Activated B cell treated with CpG ODN at 0.5 μM for 24 hours (primary cell): ENCODE measurements at regions of chr15 and their contacts with region 1.

Region 1: DNA sequence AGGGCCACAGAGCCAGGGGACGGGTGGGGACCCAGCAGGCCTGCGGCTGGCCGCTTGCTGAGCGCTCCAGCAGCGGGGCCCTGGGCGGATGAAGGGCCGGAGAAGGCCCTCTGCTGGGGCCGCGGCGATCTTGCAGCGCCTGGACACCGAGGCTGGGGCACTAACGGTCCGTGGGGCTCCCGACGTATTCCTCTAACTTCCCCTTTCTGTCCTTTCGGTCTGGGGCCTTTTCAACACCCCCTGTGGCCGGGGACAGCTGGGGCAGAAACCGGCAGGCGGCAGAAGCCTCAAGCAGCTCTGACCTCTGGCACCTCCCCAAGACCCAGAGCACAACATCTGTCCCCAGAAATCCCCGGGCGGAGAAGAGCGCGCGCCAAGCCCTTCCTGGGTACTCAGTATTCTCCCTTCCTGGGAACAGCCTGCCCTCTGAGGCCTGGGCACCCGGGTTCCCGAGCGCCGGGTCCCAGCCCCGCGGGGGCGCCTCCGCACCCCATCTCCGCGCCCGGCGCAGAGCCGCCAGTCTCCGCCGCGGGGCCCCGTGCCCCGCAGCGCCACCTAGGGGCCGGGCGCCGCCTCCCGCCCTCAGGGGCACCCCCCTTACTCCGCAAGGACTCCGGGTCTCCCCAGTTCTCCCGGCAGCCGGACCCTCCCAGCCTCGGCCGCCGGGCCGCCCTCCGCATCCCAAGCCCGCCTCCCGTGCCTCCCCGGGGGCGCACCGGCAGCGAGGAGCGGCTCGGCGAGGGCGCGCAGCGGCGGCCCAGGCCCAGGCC is 582 bp upstream of the SLCO3A1 start:
- DNase-seq: peak; percentile 31
- ATAC-seq: peak; percentile 55
- H3K4me3 Mint-ChIP-seq: peak overlapping the region; percentile 66
- H3K27ac Mint-ChIP-seq: no peak overlapping the region
- H3K4me1 Mint-ChIP-seq: peaks cover 43% of the 10 kb centered on the region
- H3K27me3 Mint-ChIP-seq: peaks cover 49% of the 10 kb centered on the region
- CTCF ChIP-seq: no peak

Region 2: GRCh38 chr15:91338766-91339165 is 514.2 kb before region 1 on chr15:
- CTCF ChIA-PET with region 1: no interaction called
- POLR2A ChIA-PET with region 1: no interaction called
- intact Hi-C with region 1: loop called (anchors 10 kb)
- DNase-seq: no peak
- ATAC-seq: no peak
- H3K4me3 Mint-ChIP-seq: no peak overlapping the region
- H3K27ac Mint-ChIP-seq: no peak overlapping the region
- H3K4me1 Mint-ChIP-seq: no peaks in the 10 kb centered on the region
- H3K27me3 Mint-ChIP-seq: peaks cover 13% of the 10 kb centered on the region
- CTCF ChIP-seq: no peak

Region 3: DNA sequence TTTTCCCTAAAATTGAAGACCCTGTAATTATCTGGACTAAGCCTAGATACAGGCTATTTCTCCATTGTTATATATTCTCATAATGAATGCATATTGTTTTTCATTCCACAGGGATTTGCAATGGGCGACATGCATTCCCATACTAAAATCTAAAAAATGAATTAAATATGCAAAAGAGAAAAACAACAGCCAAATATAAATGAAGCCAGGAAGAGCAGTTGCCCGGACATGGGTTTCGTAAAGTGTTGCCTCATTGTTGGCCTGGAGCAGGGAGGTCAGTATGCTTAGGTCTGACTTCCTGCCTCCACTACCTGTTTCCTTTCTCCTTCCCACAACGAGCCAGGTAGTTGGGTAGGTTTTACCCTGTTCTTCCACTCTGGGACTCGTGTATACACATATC is 26.5 kb before region 1 on chr15:
- CTCF ChIA-PET with region 1: no interaction called
- POLR2A ChIA-PET with region 1: no interaction called
- intact Hi-C with region 1: no loop called
- DNase-seq: no peak
- ATAC-seq: no peak
- H3K4me3 Mint-ChIP-seq: no peak overlapping the region
- H3K27ac Mint-ChIP-seq: no peak overlapping the region
- H3K4me1 Mint-ChIP-seq: no peaks in the 10 kb centered on the region
- H3K27me3 Mint-ChIP-seq: no peaks in the 10 kb centered on the region
- CTCF ChIP-seq: no peak

Region 4: GRCh38 chr15:91885714-91886270 is 32.9 kb after region 1 on chr15:
- CTCF ChIA-PET with region 1: no interaction called
- POLR2A ChIA-PET with region 1: no interaction called
- intact Hi-C with region 1: loop called (anchors 1 kb)
- DNase-seq: no peak
- ATAC-seq: no peak
- H3K4me3 Mint-ChIP-seq: no peak overlapping the region
- H3K27ac Mint-ChIP-seq: no peak overlapping the region
- H3K4me1 Mint-ChIP-seq: no peaks in the 10 kb centered on the region
- H3K27me3 Mint-ChIP-seq: no peaks in the 10 kb centered on the region
- CTCF ChIP-seq: no peak

Region 5: DNA sequence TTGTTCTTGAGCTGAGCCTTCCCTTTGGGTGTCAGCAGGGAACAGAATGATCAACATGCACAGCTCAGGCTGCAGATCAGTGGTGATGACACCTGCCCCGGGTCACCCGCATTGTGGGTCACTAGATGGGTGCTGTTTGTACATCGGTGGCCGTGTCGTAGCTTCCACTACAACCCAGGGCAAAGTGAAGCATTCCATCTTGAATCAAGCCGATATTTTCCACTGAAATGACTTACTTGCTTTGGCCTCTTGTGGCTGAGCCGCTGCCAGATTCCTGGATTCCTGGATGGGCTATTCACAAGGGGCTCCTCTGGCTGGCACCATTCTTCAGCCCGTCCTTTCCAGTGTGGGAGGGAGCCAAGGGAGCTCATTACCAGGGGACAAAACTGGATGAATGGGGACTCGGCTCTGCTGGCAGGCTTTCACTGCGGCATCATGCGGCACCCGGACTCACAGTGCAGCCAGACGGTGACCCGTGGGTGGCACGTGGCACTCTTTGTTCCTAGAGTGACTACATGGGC is 66.1 kb after region 1 on chr15:
- CTCF ChIA-PET with region 1: no interaction called
- POLR2A ChIA-PET with region 1: no interaction called
- intact Hi-C with region 1: loop called (anchors 10 kb)
- DNase-seq: no peak
- ATAC-seq: no peak
- H3K4me3 Mint-ChIP-seq: no peak overlapping the region
- H3K27ac Mint-ChIP-seq: no peak overlapping the region
- H3K4me1 Mint-ChIP-seq: peaks cover 11% of the 10 kb centered on the region
- H3K27me3 Mint-ChIP-seq: no peaks in the 10 kb centered on the region
- CTCF ChIP-seq: no peak

Region 6: DNA sequence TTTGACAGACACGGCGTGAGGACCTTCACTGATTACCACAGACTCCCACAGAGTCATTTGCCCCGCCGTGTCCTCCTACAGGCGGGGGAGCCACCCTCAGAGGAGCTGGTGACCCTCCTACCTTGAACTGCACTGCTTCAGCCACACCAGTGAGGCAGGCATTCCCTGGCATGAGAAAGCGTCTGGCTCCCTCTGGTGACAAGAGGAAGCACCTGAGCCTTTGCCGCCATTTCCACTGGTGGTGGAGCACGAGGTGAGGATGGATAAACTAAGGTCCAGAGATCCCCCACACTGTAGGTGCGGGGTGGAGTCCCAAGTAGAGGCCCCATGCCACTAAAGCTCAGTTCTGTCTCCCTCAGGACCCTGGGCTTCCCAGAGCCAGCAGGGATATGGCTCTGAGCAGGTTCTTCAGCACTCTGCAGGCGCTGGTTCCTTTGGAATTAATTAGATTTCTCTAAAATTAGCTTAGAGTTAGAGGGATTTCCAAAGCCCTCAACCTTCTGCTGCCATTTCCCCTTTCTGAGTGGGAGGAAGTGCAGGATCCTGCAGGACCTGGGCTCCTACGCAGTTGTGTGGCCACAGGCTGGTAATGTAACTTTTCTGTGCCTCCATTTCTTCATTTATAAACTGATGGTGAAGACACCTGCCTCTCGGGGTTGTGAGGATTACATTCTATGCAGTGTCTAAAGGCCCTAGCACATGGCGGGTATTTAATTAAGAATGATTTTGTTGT is 224.6 kb after region 1 on chr15:
- CTCF ChIA-PET with region 1: no interaction called
- POLR2A ChIA-PET with region 1: no interaction called
- intact Hi-C with region 1: loop called (anchors 10 kb)
- DNase-seq: no peak
- ATAC-seq: no peak
- H3K4me3 Mint-ChIP-seq: no peak overlapping the region
- H3K27ac Mint-ChIP-seq: no peak overlapping the region
- H3K4me1 Mint-ChIP-seq: no peaks in the 10 kb centered on the region
- H3K27me3 Mint-ChIP-seq: no peaks in the 10 kb centered on the region
- CTCF ChIP-seq: no peak